Right cardiac atrium (tissue), 5 donors: ENCODE measurements at regions of chr2 and their contacts with region 1.

Region 1: DNA sequence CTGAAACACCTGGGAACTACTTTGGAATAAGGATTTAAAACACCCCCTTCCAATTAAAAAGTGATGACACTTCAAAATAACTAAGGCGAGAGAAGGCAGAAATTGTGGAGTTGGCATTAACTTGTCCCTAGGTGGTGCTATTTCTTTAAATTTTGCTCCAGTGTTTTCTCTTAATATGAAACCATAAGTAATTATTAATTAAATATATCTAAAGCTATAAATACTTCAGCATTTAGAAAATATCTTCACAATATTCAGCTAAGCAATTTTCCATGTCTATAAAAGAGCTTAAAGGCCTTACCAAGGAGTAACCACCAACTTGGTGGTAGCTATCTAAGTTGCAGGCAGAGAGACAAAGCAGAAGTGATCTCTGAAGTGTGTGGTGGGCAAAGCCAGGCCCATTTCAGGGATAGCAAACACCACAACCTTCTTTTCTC is 186.8 kb upstream of the PGAP1 start:
- DNase-seq: no peak
- ATAC-seq: peak in 1 of 2 donors; percentile 40
- H3K4me3 ChIP-seq: no peak overlapping the region
- H3K27ac ChIP-seq: no peak overlapping the region
- H3K4me1 ChIP-seq: peaks cover 3% of the 10 kb centered on the region
- H3K27me3 ChIP-seq: no peaks in the 10 kb centered on the region

Region 2: GRCh38 chr2:196944584-196944983 is 168.7 kb before region 1 on chr2:
- intact Hi-C with region 1: no loop called
- DNase-seq: no peak
- ATAC-seq: no peak
- H3K4me3 ChIP-seq: no peak overlapping the region
- H3K27ac ChIP-seq: no peak overlapping the region
- H3K4me1 ChIP-seq: no peaks in the 10 kb centered on the region
- H3K27me3 ChIP-seq: no peaks in the 10 kb centered on the region

Region 3: DNA sequence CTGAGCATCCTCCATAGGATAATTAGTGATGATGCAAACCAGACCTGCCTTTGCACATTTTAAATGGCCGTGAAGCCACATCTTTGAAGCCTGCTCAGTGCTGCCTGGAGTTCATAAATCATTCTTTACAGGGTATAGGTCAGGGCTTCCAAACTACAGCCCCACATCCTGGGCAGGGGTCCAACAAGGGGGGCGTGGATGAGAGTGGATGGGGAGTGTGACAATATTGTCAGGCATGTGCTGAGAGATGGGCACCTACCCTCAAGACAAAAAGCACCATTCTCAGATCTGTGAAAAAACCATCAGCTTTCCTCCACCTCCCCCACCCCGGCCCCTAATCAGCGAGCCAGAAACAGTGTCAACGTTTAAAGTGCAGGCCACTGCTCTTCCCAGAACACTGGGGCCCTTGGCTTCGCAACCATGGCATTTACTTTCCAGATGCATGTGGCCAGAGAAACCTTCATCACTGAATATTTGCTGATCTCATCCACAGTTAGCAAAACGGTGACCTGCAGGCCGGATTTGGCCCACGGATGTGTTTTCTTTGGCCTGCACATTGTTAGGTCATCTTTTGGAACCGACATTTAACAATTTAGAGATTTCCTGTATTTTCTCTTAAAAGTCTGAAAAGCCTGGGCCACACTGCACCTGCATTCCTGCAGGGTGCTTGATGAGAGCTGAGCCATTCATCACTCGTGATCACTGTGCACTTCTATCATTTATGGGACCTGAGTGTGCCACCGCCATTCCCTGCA is 66.6 kb after region 1 on chr2:
- intact Hi-C with region 1: loop called in 1 of 4 experiments (anchors 10 kb)
- DNase-seq: peak; percentile 53 to 73 (median 66)
- ATAC-seq: peak; percentile 59 to 80
- H3K4me3 ChIP-seq: no peak overlapping the region
- H3K27ac ChIP-seq: no peak overlapping the region
- H3K4me1 ChIP-seq: peaks cover 4% of the 10 kb centered on the region
- H3K27me3 ChIP-seq: no peaks in the 10 kb centered on the region

Region 4: GRCh38 chr2:197310271-197310985 is 197.1 kb after region 1 on chr2 and contains the start of gene ANKRD44:
- intact Hi-C with region 1: loop called in 2 of 4 experiments (anchors 5 to 10 kb)
- DNase-seq: peak; percentile 94 to 97 (median 97)
- ATAC-seq: peak; percentile 98 to 99
- H3K4me3 ChIP-seq: peak within 1 kb of the TSS; percentile 87
- H3K27ac ChIP-seq: peak within 1 kb of the TSS; percentile 75
- H3K4me1 ChIP-seq: peaks cover 8% of the 10 kb centered on the region
- H3K27me3 ChIP-seq: no peaks in the 10 kb centered on the region
- total RNA-seq, gene ANKRD44: 13.9 to 18.8 (median 14.5) TPM

Region 5: DNA sequence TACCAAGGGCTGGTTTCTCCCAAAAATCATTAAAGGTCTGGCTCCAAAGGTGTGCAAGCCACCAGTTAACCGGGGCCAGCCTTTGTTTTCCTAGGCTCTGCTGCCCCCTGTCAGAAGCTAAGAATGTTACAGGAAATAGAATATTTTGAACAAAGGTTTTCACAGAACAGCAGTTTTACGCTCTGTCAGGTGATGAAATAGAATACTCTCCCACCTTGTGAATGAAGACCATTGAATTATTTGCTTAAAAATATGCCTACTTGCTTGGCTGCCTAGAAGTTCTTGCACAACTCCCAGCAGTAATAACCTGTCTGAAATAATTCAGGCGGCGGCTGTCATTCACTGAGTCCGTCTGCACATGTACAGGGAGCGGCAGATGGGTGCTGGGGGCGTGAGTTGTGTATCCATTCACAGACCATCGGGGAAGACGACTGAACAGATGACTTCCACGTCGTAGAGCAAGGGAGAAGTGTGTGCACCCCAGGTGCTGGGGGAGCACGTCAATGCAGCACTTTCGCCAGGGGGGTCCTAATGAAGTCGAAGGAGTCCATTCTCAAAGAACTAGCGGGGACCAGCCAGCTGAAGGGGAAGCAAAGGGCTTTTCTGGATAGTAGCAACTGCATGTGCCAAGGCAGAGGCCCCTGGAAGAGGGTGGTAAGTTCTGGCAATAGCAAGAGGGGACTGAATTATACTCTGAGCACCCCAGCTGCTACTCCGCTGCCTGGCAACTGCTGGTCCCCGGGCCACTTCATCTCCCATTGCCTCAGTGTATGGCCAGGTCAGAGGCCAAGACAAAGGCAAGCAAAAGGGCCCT is 265.4 kb after region 1 on chr2:
- intact Hi-C with region 1: loop called (anchors 5 kb)
- DNase-seq: peak in 1 of 3 donors; percentile 53
- ATAC-seq: peak; percentile 61 to 71
- H3K4me3 ChIP-seq: no peak overlapping the region
- H3K27ac ChIP-seq: no peak overlapping the region
- H3K4me1 ChIP-seq: no peaks in the 10 kb centered on the region
- H3K27me3 ChIP-seq: no peaks in the 10 kb centered on the region

Region 6: GRCh38 chr2:197383823-197384222 is 270.5 kb after region 1 on chr2:
- intact Hi-C with region 1: loop called (anchors 5 kb)
- DNase-seq: no peak
- ATAC-seq: no peak
- H3K4me3 ChIP-seq: no peak overlapping the region
- H3K27ac ChIP-seq: no peak overlapping the region
- H3K4me1 ChIP-seq: no peaks in the 10 kb centered on the region
- H3K27me3 ChIP-seq: no peaks in the 10 kb centered on the region

Region 7: GRCh38 chr2:197461057-197461456 is 347.8 kb after region 1 on chr2:
- intact Hi-C with region 1: no loop called
- DNase-seq: no peak
- ATAC-seq: peak in 1 of 2 donors; percentile 83
- H3K4me3 ChIP-seq: no peak overlapping the region
- H3K27ac ChIP-seq: no peak overlapping the region
- H3K4me1 ChIP-seq: peaks cover 3% of the 10 kb centered on the region
- H3K27me3 ChIP-seq: no peaks in the 10 kb centered on the region